Vagina (tissue), 2 donors: ENCODE measurements at regions of chr1 and their contacts with region 1.

Region 1: DNA sequence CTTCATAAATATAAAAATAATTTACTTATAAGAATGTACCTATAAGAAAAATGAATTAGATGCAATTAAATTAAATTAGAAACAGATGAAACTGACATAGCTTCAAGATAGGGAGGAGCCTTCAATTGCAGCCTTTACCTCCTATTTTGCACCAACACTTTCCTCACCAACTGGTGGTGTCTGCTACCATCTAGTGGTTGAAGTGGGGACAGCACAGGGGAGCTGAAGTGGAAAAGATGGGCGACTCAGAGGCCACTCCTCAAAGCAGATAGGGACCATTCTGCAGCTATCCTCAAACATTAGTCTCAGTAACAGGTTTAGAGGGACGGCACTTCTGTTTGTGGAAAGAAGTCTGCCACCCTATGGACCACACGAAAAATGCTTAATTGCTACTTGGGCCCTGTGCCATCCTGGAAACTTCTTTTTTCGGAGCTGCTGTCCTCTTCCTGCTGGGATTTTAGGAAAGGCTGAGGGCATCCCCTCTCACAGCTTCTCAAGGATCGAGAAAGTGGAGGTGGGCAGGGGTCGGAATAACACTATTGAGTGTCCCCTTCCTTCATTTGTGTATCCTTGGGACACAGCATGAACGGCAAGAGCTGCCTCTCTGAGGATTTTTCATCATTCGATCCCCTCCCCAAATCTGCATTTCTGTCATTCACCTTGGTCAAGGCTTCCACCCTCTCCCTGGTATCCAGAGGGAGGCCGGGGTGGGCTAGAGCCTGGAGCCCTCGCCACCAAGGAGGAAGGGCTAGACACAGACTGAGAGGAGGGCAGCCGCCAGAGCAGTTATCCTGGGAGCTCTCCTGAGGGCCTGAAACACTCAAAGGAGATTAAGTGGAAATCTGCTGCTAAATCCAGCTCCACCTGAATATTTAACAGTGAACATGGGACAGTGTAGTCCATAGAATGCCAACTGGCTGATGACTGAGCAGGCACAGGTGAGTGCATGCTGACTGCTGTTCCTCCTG is 9.6 kb downstream of the PROK1 start:
- DNase-seq: no peak
- H3K4me3 ChIP-seq: no peak overlapping the region
- H3K27ac ChIP-seq: no peak overlapping the region
- H3K4me1 ChIP-seq: peaks cover 11% of the 10 kb centered on the region
- H3K27me3 ChIP-seq: no peaks in the 10 kb centered on the region
- CTCF ChIP-seq: peak; percentile 88 to 99 (median 98)
- POLR2A ChIP-seq: no peak

Region 2: DNA sequence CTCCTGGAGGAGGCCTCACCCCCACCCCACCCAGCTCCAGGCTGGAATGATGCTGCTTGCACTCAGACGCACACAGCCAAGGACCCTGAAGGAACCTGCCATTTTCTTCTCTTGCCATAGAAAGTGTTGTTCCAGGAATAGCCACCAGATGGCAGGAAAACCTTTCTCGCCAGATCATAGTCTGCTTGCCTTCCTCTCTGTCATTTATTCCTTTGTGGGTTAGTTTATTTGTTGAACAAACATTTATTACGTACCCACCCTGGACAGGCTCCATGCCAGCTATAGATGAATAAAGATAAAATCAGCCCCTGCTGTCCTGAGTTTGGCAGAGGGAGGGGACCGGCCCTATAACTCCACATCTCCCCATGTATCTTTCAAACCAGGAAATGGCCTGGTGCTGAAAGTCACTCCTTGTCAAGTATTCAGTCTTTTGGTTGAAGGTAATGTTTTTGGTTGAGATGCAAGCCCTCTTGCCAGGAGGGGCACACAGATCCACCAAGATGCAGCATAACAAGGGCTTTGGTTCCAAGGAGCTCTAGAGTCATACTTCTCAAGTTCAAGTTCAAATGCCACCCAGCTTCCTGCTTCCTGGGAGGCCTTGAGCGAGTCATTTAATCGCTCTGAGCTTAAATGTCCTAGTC is 257.4 kb before region 1 on chr1:
- intact Hi-C with region 1: loop called (anchors 2 kb)
- DNase-seq: no peak
- H3K4me3 ChIP-seq: no peak overlapping the region
- H3K27ac ChIP-seq: no peak overlapping the region
- H3K4me1 ChIP-seq: peaks cover 5% of the 10 kb centered on the region
- H3K27me3 ChIP-seq: no peaks in the 10 kb centered on the region
- CTCF ChIP-seq: peak; percentile 67 to 80 (median 77)
- POLR2A ChIP-seq: no peak

Region 3: DNA sequence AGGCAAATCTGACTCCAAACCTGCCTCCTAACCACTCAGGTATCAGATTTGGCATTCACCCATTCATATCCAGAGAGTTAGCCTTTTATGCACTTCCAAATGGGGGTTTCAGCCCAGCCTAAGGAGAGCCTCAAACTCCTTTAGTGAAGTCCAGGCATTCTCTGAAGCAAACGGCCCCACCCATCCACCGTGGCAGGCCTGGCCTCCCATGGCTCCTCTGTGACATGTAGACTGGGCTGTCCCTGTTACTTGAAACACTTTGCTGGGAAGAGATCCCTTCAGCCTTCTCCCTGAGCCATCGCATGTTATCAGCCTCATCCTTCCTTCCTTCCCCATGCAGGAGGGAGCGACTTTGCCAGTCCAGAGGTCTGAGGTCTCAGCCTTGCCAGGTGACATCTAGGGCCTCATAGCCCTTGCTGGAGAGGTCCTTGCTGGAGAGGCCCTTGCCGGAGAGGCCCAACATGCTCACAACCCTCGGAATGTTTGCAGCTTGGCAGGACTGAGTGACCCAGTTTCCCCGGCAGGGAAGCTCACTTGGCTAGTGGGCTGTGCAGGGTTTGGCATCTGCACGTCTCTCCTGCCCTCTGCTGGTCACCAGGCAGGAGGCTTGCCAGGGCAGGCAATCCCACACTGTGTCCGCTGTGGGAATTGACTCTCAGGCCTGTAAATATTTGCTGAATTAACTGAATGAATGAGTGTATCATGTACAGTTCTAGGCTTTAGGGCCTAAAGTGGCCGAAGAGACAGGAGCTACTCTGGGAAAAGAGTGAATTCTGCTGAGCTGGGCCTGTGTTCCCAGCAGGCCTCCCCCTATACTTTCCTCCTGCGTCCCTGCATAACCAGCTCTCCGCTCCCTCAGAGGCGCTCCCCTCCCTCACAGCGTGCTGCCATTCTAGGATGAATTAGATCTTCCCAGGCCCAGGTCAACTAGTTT is 148.1 kb before region 1 on chr1:
- intact Hi-C with region 1: loop called (anchors 10 kb)
- DNase-seq: no peak
- H3K4me3 ChIP-seq: no peak overlapping the region
- H3K27ac ChIP-seq: no peak overlapping the region
- H3K4me1 ChIP-seq: no peaks in the 10 kb centered on the region
- H3K27me3 ChIP-seq: no peaks in the 10 kb centered on the region
- CTCF ChIP-seq: peak; percentile 92 to 99 (median 98)
- POLR2A ChIP-seq: no peak